ENCODE measurements at regions of chr10 and their contacts with region 1.

Region 1: DNA sequence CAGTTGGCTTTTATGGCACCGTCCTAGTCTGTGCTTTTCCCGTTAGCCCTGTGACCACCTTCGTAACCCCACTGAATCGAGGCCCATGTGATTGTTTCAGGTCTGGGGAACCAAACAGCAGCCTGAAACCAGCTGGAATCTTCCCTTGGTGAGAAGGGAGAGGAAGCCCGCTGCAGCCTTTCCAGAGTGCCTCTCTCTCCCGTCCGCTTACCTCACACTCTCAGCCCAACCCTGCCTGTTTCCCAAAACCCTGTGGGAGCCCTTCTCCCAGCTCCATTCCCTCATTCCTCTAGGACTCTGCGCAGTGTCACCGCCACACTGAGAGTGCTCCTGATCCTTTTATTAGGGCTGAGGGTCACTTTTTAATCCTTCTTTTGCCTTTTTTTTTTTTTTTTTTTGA is 139.6 kb downstream of the WDR37 start:
- DNase-seq: peak; percentile 24
- ATAC-seq: peak; percentile 78
- H3K4me3 Mint-ChIP-seq: 0 out of 2 replicates have a peak overlapping the region, but pooled peaks have one; percentile 1
- H3K27ac Mint-ChIP-seq: no peak overlapping the region
- H3K4me1 Mint-ChIP-seq: peaks cover 40% of the 10 kb centered on the region
- H3K27me3 Mint-ChIP-seq: peaks cover 7% of the 10 kb centered on the region; the same call in 1 of the 2 replicates
- CTCF ChIP-seq: no peak

Region 2: DNA sequence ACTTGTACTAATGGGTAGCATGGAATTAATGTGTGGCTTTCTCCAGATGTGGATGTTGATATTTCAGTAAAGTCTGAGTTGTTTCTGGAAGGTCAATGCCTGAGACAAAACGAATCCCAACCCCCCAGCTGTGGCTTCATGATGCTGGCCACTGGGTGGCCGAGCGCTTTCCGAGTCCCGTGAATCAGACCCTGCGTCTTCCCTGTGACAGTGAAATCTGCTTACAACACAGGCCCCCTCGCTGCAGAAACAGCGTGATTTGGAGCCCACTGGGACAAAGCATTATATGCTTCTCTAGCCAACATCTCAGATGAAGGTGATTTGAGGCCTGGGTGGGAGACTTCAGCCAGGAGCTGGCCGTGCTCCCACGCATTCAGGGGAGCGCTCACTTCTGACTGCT is 15.0 kb before region 1 on chr10:
- CTCF ChIA-PET with region 1: interaction called, 7 read pairs
- POLR2A ChIA-PET with region 1: interaction called, 10 read pairs
- DNase-seq: no peak
- ATAC-seq: peak; percentile 46; the same call in 1 of the 2 replicates
- H3K4me3 Mint-ChIP-seq: no peak overlapping the region
- H3K27ac Mint-ChIP-seq: no peak overlapping the region
- H3K4me1 Mint-ChIP-seq: peaks cover 11% of the 10 kb centered on the region
- H3K27me3 Mint-ChIP-seq: no peaks in the 10 kb centered on the region; the same call in 1 of the 2 replicates
- CTCF ChIP-seq: no peak

Measured in WTC11 (cell line).